ENCODE measurements at regions of chr1 and their contacts with region 1.

Region 1: GRCh38 chr1:56508523-56508983 is 70.8 kb downstream of the PLPP3 start:
- DNase-seq: peak; percentile 67 to 89 (median 74)
- ATAC-seq: peak; percentile 71 to 88 (median 78)
- H3K4me3 ChIP-seq: no peak overlapping the region
- H3K27ac ChIP-seq: peak overlapping the region; percentile 36 to 84 (median 70)
- H3K4me1 ChIP-seq: peaks cover 7 to 92% (median 83%) of the 10 kb centered on the region in 12 donors
- H3K27me3 ChIP-seq: no peaks in the 10 kb centered on the region
- CTCF ChIP-seq: no peak
- POLR2A ChIP-seq: no peak

Region 2: GRCh38 chr1:56357927-56358690 is 150.4 kb before region 1 on chr1:
- intact Hi-C with region 1: loop called in 1 of 10 experiments (anchors 10 kb)
- DNase-seq: no peak
- ATAC-seq: peak in 1 of 4 donors; percentile 75
- H3K4me3 ChIP-seq: no peak overlapping the region
- H3K27ac ChIP-seq: peak overlapping the region in 9 of 12 donors; percentile 28 to 81 (median 42)
- H3K4me1 ChIP-seq: peaks cover 0 to 44% (median 14%) of the 10 kb centered on the region in 12 donors
- H3K27me3 ChIP-seq: no peaks in the 10 kb centered on the region
- CTCF ChIP-seq: no peak
- POLR2A ChIP-seq: no peak

Region 3: DNA sequence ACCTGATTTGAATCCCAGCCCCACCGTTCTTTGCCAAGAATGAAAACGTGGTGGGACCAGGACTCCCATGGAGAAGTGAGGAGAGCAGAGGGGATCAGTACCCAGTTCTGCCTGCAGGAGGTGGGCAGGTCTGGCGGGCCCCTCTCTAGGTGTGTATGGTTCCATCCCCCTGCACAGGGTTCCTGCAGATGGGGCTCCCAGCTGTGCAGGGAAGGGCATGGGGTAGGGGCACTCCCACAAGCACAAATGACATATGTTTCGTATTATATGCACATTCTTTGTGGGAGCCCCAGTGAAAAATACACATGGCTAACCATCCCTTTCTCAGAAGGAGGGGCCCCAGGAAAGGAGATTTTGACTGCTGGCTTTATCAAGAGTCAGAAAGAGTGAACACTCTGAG is 73.8 kb before region 1 on chr1:
- intact Hi-C with region 1: loop called in 1 of 10 experiments (anchors 10 kb)
- DNase-seq: no peak
- ATAC-seq: no peak
- H3K4me3 ChIP-seq: no peak overlapping the region
- H3K27ac ChIP-seq: no peak overlapping the region
- H3K4me1 ChIP-seq: peaks cover 0 to 69% (median 40%) of the 10 kb centered on the region in 12 donors
- H3K27me3 ChIP-seq: no peaks in the 10 kb centered on the region
- CTCF ChIP-seq: no peak
- POLR2A ChIP-seq: no peak

Measured in heart left ventricle (tissue), 16 donors.